ENCODE measurements at regions of chr14 and their contacts with region 1.

Region 1: DNA sequence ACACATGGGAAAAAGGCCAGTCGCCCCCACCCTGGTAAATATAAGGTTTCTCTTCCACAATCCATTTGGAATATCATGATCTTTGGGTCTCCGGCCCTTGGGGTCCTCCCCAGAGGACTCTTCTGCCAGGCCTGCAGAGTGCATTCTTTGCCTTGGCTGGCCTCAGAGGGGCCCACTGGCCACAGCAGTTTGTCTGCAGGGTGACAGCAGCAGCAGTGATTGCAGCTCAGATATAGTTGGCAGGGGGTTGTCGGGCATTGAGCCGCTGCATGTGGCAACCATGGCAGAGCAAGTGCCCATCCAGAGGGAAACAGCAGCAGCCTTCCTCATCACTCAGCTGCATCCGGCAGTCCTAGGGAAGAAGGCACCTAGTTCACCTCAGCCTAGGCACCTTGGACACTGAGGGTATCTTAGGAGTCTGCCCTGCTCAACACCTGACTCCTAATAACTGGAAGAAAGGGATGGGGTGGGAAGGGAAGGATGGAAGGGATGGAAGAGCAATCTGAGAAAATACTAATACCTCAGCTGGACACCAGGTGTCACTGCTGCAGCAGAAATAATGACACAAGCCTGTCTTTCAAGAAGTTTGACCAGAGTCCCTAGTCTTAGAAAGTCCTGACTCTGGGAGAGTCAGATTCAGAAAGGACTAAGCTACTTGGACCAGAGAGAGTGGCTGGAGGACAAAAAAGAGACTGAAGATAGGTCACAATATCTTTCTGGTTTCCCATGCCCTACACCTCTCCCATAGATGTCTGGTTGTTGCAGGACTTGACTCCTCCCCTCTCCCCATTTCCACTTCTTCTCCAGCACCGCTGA is 8.9 kb downstream of the AJUBA start:
- H3K4me3 ChIP-seq: no peak overlapping the region
- H3K27ac ChIP-seq: no peak overlapping the region
- H3K4me1 ChIP-seq: peaks cover 20% of the 10 kb centered on the region
- CTCF ChIP-seq: peak; percentile 63

Region 2: DNA sequence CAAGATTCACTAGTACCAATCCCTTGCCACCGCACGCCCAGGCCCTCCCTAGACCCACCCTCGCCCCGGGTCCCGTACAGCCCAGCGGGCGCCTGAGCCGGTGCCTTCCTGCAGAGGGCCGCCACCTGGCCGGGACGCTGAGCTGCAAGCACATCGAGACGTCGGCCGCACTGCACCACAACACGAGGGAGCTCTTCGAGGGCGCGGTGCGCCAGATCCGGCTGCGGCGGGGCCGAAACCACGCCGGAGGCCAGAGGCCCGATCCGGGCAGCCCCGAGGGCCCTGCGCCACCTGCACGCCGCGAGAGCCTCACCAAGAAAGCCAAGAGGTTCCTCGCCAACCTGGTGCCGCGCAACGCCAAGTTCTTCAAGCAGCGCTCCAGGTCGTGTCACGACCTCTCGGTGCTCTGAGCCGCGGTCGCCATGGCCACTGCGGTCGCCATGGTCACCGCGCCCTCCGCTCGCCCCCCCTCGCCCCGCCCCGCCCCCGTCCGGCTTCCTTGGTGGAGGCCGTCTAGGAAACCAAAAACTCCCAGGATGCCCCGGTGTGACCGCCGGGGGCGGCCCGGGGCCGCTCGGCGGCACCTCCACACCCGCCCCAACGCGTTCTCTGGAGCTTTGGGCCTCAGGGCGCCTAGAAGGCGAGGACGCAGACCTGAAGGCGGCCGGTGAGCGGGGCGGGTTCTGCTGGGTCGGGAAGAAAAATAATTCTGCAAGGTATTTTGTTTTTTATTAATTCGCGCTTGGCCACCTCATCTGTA is 86.7 kb before region 1 on chr14:
- CTCF ChIA-PET with region 1: no interaction called
- POLR2A ChIA-PET with region 1: interaction called, 10 read pairs
- H3K4me3 ChIP-seq: peak overlapping the region; percentile 55
- H3K27ac ChIP-seq: peak overlapping the region; percentile 78
- H3K4me1 ChIP-seq: peaks cover 6% of the 10 kb centered on the region
- CTCF ChIP-seq: peak; percentile 69; the same call in 1 of the 2 replicates

Region 3: GRCh38 chr14:22955702-22956569 is 17.5 kb before region 1 on chr14:
- CTCF ChIA-PET with region 1: interaction called, 43 read pairs
- POLR2A ChIA-PET with region 1: interaction called, 26 read pairs
- H3K4me3 ChIP-seq: peak overlapping the region; percentile 75
- H3K27ac ChIP-seq: peak overlapping the region; percentile 76; the same call in 1 of the 2 replicates
- H3K4me1 ChIP-seq: no peaks in the 10 kb centered on the region
- CTCF ChIP-seq: no peak

Region 4: DNA sequence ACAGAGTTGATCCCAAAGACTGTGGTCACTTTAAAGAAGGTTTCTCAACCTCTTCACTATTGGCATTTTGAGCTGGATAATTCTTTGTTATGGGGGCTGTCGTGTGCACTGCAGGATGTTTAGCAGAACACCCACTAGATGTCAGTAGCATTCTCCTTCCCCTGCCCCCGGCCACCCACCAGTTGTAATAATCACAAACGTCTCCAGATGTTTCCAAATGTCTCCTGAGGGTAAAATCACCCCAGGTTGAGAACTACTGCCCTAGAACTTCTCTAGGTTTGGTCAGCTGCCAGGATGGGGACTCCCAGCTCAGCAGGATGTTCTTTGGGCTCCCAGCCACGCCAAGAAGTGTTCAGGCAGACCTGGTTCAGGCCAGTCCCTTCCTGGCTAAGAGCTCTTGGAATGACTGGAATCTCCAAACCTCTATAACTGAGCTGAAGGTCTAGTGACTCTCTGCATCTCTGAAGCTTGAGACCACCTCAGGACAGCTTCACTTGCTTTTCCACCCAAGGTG is 21.4 kb after region 1 on chr14:
- CTCF ChIA-PET with region 1: interaction called, 227 read pairs
- POLR2A ChIA-PET with region 1: interaction called, 3 read pairs
- H3K4me3 ChIP-seq: no peak overlapping the region
- H3K27ac ChIP-seq: no peak overlapping the region
- H3K4me1 ChIP-seq: peaks cover 7% of the 10 kb centered on the region
- CTCF ChIP-seq: no peak

Region 5: DNA sequence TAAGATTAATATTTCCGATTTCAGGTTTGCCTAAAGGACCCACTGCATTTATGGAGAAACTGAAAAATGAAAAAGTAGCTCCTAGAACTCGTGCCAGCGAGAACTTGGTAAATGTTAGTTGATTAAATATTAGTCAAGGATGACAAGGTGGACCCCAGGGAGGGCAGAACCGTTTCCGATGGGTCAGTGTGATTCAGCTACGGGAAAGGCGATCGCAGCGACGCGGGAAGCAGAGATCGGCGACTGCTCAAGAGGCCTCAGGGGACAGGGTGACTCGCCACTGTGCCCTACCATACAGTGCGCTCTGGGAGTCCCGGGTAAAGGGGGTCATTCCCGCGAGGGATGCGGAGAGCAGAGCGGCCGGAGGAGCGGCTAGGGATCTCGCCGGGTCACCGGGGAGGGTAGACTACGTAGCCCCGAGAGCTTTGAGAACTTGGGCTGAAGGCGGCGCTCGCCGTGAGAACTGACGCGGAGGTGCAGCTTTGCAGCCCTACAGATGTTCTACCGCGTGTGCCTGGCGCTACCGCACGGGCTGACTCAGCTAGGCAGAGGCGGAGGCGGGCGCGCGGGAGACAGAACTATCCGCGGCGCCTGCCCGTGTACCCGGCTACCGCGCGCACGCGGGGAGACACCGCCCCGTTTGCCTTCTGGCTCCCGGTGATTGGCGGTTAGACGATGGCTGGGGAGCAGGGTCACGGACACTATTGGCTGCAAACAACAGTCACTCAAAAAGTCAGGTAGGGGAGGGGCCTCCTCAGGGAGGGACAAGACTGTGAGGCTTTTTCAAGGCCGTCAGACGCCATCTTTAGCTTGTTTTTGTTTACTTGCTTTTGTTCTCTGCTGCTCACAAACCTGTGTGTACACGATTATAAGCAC is 33.4 kb after region 1 on chr14:
- CTCF ChIA-PET with region 1: interaction called, 6 read pairs
- POLR2A ChIA-PET with region 1: interaction called, 20 read pairs
- H3K4me3 ChIP-seq: peak overlapping the region; percentile 52
- H3K27ac ChIP-seq: peak overlapping the region; percentile 91
- H3K4me1 ChIP-seq: peaks cover 8% of the 10 kb centered on the region; the same call in 1 of the 2 replicates
- CTCF ChIP-seq: peak; percentile 85

Region 6: DNA sequence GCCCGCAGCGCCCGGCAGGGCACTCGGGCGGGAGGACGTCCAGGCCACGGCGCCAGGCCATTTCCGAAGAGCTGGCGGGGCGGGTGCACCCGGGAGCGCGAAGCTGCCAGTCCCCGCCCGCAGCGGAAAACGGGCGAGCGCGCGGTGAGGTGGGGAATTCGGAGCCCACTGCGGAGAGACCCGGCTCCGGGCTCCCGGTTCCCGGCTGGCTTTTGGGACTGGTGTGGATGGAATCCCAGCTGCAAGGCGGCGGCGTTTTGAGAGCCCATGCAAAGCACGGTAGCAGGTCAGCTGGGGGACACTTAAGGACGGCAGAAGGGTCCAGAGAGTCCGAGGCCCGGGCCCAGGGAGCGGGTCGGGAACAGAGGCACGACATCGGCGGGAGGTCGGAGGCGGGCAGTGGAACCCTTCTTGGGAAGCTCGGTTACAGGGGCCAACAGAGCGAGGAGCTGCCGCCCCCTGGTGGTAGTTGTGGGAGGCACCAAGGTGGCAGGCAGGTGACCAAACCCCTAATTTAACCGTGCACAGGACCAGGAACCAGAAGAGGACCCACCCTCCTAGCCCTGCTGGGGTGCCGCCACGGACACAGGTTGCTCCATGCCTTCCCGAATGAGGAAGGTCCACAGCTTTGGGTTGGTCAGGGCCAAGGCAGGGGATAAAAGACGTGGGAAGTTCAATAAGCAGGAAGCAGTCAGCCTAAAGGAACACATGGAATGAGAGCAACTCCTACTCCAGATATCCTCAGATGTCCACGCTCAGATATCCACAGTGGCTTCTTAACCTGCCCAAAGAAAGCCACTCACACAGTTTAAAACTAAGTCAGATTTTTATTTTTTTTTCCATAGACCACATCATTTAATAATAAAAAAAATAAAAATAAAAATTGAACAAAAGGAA is 84.6 kb after region 1 on chr14:
- CTCF ChIA-PET with region 1: interaction called, 39 read pairs
- POLR2A ChIA-PET with region 1: interaction called, 22 read pairs
- H3K4me3 ChIP-seq: peak overlapping the region; percentile 65
- H3K27ac ChIP-seq: peak overlapping the region; percentile 73
- H3K4me1 ChIP-seq: peaks cover 4% of the 10 kb centered on the region; the same call in 1 of the 2 replicates
- CTCF ChIP-seq: peak; percentile 96

Region 7: DNA sequence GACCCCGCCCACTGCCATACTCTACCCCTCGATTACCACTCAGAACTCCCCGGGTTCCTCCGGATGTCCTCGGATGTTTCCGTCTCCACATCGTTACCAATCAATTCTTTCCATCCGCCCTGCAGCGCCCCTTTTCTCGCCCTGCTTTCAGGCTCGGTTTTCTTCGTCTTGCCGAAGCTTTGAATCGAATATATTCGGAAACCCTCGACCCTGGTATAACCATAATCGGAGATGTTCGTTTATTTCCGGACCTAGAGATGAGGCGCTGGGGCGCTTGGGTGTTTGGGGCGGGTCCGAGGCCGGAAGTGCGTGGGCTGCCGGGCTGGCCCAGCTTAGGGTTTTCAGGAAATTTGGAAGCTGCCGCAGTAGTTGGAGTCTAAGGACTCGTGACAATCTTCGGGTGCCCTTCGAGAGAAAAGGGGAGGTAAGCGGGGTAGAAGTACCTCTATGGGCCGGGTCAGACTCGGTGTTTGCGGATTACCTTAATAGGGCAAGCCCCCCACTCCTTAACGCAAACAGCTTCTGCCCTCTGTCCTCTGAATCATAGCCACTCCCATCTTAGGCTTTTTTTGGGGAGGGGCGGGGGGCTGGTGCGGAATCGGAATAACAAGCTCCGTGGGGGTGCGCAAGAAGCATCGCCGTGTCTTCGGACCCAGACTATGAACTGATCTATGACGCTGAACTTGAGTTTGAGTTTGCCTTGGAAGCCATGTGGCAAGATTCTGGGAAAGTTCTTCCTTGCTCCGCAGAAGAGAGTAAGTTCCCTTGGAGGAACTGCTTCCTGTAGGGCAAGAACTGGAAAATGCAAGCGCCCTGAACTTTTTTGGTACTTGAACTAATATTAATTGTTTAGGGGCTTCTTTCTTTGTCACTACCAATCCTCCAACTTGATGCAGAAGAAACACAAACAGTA is 122.0 kb after region 1 on chr14 and contains the start of gene C14orf119:
- CTCF ChIA-PET with region 1: interaction called, 11 read pairs
- POLR2A ChIA-PET with region 1: interaction called, 7 read pairs
- H3K4me3 ChIP-seq: peak within 1 kb of the TSS; percentile 97
- H3K27ac ChIP-seq: peak within 1 kb of the TSS; percentile 92
- H3K4me1 ChIP-seq: peaks cover 10% of the 10 kb centered on the region; the same call in 1 of the 2 replicates
- CTCF ChIP-seq: no peak

Region 8: GRCh38 chr14:23106747-23107045 is 133.3 kb after region 1 on chr14:
- CTCF ChIA-PET with region 1: no interaction called
- POLR2A ChIA-PET with region 1: no interaction called
- H3K4me3 ChIP-seq: no peak overlapping the region
- H3K27ac ChIP-seq: no peak overlapping the region
- H3K4me1 ChIP-seq: peaks cover 4% of the 10 kb centered on the region
- CTCF ChIP-seq: no peak